CD8-positive, alpha-beta memory T cell (primary cell): ENCODE measurements at regions of chr1 and their contacts with region 1.

Region 1: DNA sequence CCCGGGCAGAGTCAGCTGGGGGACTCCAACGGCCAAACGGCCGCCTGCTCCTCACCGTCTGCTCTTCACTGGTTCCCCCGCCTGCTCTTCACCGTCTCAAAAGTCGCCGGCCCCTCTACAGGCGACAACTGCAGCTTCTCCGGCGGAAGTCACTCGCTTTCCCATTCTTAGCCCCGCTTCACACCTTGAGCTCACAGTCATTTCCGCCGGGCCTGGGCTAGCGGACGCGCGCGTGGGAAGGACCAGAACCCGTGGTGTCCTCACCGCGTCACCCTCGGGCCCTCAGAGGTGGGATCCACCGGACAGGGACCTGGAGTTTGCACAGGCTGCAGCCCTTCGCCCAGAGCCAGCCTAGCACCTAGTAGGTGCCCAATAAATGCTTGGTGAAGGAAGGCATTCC is 27.9 kb upstream of the HJV start:
- DNase-seq: peak in 1 of 5 donors; percentile 50
- H3K4me3 ChIP-seq: no peak overlapping the region
- H3K4me3 Mint-ChIP-seq: peak overlapping the region in 2 of 7 donors; percentile 29 to 31
- H3K27ac ChIP-seq: no peak overlapping the region
- H3K27ac Mint-ChIP-seq: peak overlapping the region in 5 of 8 donors; percentile 29 to 85 (median 59)
- H3K4me1 ChIP-seq: no peaks in the 10 kb centered on the region
- H3K4me1 Mint-ChIP-seq: peaks cover 19 to 39% (median 32%) of the 10 kb centered on the region in 3 donors
- H3K27me3 ChIP-seq: no peaks in the 10 kb centered on the region
- H3K27me3 Mint-ChIP-seq: no peaks in the 10 kb centered on the region

Region 2: GRCh38 chr1:146019231-146020057 is 30.0 kb before region 1 on chr1:
- CTCF ChIA-PET with region 1: no interaction called
- POLR2A ChIA-PET with region 1: no interaction called
- DNase-seq: no peak
- H3K4me3 ChIP-seq: no peak overlapping the region
- H3K4me3 Mint-ChIP-seq: peak overlapping the region in 5 of 7 donors; percentile 17 to 69 (median 29)
- H3K27ac ChIP-seq: no peak overlapping the region
- H3K27ac Mint-ChIP-seq: peak overlapping the region in 2 of 8 donors; percentile 11 to 49
- H3K4me1 ChIP-seq: peaks cover 8% of the 10 kb centered on the region
- H3K4me1 Mint-ChIP-seq: peaks cover 8 to 14% (median 9%) of the 10 kb centered on the region in 3 donors
- H3K27me3 ChIP-seq: peaks cover 31% of the 10 kb centered on the region
- H3K27me3 Mint-ChIP-seq: peaks cover 21 to 74% of the 10 kb centered on the region in 2 donors

Region 3: GRCh38 chr1:146036965-146037646 is 12.3 kb before region 1 on chr1:
- CTCF ChIA-PET with region 1: interaction called, 56 read pairs
- POLR2A ChIA-PET with region 1: interaction called, 57 read pairs
- DNase-seq: peak; percentile 48 to 82 (median 79)
- H3K4me3 ChIP-seq: peak overlapping the region; percentile 88
- H3K4me3 Mint-ChIP-seq: peak overlapping the region; percentile 93 to 99 (median 97)
- H3K27ac ChIP-seq: peak overlapping the region; percentile 64
- H3K27ac Mint-ChIP-seq: peak overlapping the region; percentile 94 to 98 (median 96)
- H3K4me1 ChIP-seq: peaks cover 10% of the 10 kb centered on the region
- H3K4me1 Mint-ChIP-seq: peaks cover 37 to 52% (median 43%) of the 10 kb centered on the region in 3 donors
- H3K27me3 ChIP-seq: no peaks in the 10 kb centered on the region
- H3K27me3 Mint-ChIP-seq: peaks cover 3 to 24% of the 10 kb centered on the region in 2 donors